Natural killer cell (primary cell): ENCODE measurements at regions of chr4 and their contacts with region 1.

Region 1: GRCh38 chr4:47562297-47562696 is 77.2 kb downstream of the ATP10D start:
- DNase-seq: peak in 1 of 2 donors; percentile 7
- ATAC-seq: peak in 1 of 3 donors; percentile 58
- H3K4me3 ChIP-seq: no peak overlapping the region
- H3K4me3 Mint-ChIP-seq: no peak overlapping the region
- H3K27ac ChIP-seq: no peak overlapping the region
- H3K27ac Mint-ChIP-seq: no peak overlapping the region
- H3K4me1 ChIP-seq: no peaks in the 10 kb centered on the region
- H3K4me1 Mint-ChIP-seq: peaks cover 5 to 6% of the 10 kb centered on the region in 2 donors
- H3K27me3 ChIP-seq: no peaks in the 10 kb centered on the region
- H3K27me3 Mint-ChIP-seq: no peaks in the 10 kb centered on the region
- CTCF ChIP-seq: no peak

Region 2: DNA sequence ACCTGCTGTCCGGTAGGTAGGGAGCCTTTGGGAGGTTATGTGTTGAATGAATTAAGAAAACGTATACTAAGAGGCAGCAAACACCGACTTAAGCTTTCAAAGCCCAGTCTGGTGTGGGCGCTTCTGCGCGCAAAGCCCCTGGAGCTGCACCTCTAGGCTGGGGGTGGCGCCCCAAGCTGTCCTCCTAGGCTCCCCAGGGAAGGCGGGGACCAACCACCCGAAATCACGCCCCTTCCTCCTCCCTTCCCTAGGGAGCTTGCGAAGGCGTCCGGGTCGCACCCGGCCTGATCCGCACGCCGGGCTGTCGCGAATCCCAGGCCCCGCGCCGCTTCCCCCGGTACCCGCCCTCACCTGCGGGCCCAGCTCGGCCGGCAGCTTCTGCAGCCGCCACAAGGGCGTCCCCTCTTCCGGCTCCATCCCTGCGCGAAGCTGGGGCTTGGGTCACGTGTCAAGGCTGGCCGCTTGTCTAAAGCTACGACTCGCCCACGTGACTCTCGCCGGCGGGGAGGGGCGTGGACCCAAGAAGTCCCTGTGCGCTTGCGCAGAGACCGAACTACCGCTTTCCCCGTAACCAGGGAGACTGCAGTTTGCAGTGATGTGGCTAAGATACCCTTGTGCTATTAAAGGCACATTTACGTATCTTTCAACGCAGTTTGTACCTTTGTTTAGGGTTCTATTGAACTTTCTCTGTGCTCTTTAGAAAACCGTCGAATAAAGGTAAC is 98.9 kb before region 1 on chr4 and contains the start of gene COMMD8:
- intact Hi-C with region 1: loop called (anchors 1 kb)
- DNase-seq: peak; percentile 96 to 99
- ATAC-seq: peak; percentile 95 to 97 (median 95)
- H3K4me3 ChIP-seq: peak within 1 kb of the TSS; percentile 73
- H3K4me3 Mint-ChIP-seq: peak within 1 kb of the TSS; percentile 63
- H3K27ac ChIP-seq: peak within 1 kb of the TSS; percentile 80
- H3K27ac Mint-ChIP-seq: peak within 1 kb of the TSS; percentile 86 to 92
- H3K4me1 ChIP-seq: peaks cover 9% of the 10 kb centered on the region
- H3K4me1 Mint-ChIP-seq: peaks cover 21 to 40% of the 10 kb centered on the region in 2 donors
- H3K27me3 ChIP-seq: no peaks in the 10 kb centered on the region
- H3K27me3 Mint-ChIP-seq: no peaks in the 10 kb centered on the region
- CTCF ChIP-seq: peak; percentile 22
- total RNA-seq, gene COMMD8: 12.3 to 19.6 (median 13.1) TPM

Region 3: GRCh38 chr4:47490550-47490949 is 71.7 kb before region 1 on chr4:
- intact Hi-C with region 1: loop called (anchors 5 kb)
- DNase-seq: peak in 1 of 2 donors; percentile 56
- ATAC-seq: peak; percentile 76 to 89 (median 88)
- H3K4me3 ChIP-seq: no peak overlapping the region
- H3K4me3 Mint-ChIP-seq: no peak overlapping the region
- H3K27ac ChIP-seq: no peak overlapping the region
- H3K27ac Mint-ChIP-seq: no peak overlapping the region
- H3K4me1 ChIP-seq: no peaks in the 10 kb centered on the region
- H3K4me1 Mint-ChIP-seq: peaks cover 29 to 37% of the 10 kb centered on the region in 2 donors
- H3K27me3 ChIP-seq: no peaks in the 10 kb centered on the region
- H3K27me3 Mint-ChIP-seq: no peaks in the 10 kb centered on the region
- CTCF ChIP-seq: peak; percentile 59

Region 4: GRCh38 chr4:47612116-47613023 is 50.1 kb after region 1 on chr4:
- intact Hi-C with region 1: no loop called
- DNase-seq: no peak
- ATAC-seq: no peak
- H3K4me3 ChIP-seq: no peak overlapping the region
- H3K4me3 Mint-ChIP-seq: no peak overlapping the region
- H3K27ac ChIP-seq: no peak overlapping the region
- H3K27ac Mint-ChIP-seq: no peak overlapping the region
- H3K4me1 ChIP-seq: no peaks in the 10 kb centered on the region
- H3K4me1 Mint-ChIP-seq: no peaks in the 10 kb centered on the region
- H3K27me3 ChIP-seq: peaks cover 4% of the 10 kb centered on the region
- H3K27me3 Mint-ChIP-seq: no peaks in the 10 kb centered on the region
- CTCF ChIP-seq: no peak

Region 5: DNA sequence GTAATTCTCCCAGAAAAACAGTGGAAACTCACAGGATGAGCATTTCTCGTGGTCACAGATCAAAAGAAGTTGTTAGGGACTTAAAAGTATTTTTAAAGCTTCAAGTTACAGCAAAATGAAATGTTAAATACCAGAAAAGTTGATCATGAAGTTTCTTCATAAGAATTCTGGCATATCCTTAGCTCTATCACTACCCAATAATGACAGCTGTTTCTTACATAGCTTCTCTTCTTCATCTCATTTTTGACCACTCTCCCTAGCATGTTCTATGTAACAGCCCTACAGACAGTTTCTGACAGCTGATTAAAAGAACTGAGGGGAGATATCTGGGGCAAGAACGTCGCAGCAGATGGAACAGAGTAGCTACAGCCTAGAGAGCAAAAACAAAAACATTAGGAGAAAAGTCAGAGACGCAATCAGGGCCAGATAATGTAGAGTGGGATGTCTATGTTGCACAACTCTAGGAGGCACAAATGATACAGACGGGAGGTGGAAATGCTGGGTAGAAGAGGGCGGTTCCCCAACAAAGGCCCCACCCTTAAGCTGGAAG is 166.9 kb after region 1 on chr4:
- intact Hi-C with region 1: no loop called
- DNase-seq: no peak
- ATAC-seq: no peak
- H3K4me3 ChIP-seq: no peak overlapping the region
- H3K4me3 Mint-ChIP-seq: no peak overlapping the region
- H3K27ac ChIP-seq: no peak overlapping the region
- H3K27ac Mint-ChIP-seq: no peak overlapping the region
- H3K4me1 ChIP-seq: no peaks in the 10 kb centered on the region
- H3K4me1 Mint-ChIP-seq: no peaks in the 10 kb centered on the region
- H3K27me3 ChIP-seq: peaks cover 3% of the 10 kb centered on the region
- H3K27me3 Mint-ChIP-seq: peaks cover 26 to 45% of the 10 kb centered on the region in 2 donors
- CTCF ChIP-seq: no peak